PC-3 (cell line): ENCODE measurements at regions of chr21 and their contacts with region 1.

Region 1: DNA sequence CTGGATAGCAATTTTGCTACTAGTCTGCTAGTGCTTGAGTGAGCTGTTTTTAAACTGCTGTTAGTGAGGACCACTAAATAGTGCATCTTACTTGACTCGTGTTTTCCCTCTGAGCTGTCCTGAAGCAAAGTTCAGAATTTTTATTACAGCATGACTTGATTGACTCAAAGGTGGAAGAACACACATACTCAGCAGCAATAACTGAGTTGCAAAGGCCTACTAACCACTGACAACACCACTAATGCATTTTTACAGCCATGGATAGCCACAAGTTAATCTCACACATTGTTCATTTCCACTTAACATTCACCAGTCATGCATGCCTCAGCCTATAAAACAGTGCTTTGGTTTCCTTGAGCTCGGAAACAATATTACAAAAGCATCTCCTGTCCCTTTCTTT is 148.7 kb downstream of the RUNX1 start:
- DNase-seq: peak; percentile 96
- ATAC-seq: peak; percentile 97
- H3K4me3 ChIP-seq: 0 out of 2 replicates have a peak overlapping the region, but pooled peaks have one; percentile 19
- H3K27ac ChIP-seq: peak overlapping the region; percentile 78
- H3K4me1 ChIP-seq: peaks cover 22% of the 10 kb centered on the region
- H3K27me3 ChIP-seq: no peaks in the 10 kb centered on the region
- CTCF ChIP-seq: no peak

Region 2: GRCh38 chr21:34865928-34866284 is 34.5 kb before region 1 on chr21:
- CTCF ChIA-PET with region 1: no interaction called
- POLR2A ChIA-PET with region 1: no interaction called
- intact Hi-C with region 1: no loop called
- DNase-seq: peak; percentile 62
- ATAC-seq: peak; percentile 6; the same call in 1 of the 2 replicates
- H3K4me3 ChIP-seq: no peak overlapping the region
- H3K27ac ChIP-seq: peak overlapping the region; percentile 78
- H3K4me1 ChIP-seq: peaks cover 50% of the 10 kb centered on the region
- H3K27me3 ChIP-seq: no peaks in the 10 kb centered on the region
- CTCF ChIP-seq: no peak

Region 3: GRCh38 chr21:34933609-34934335 is 33.4 kb after region 1 on chr21:
- CTCF ChIA-PET with region 1: no interaction called
- POLR2A ChIA-PET with region 1: no interaction called
- intact Hi-C with region 1: no loop called
- DNase-seq: no peak
- ATAC-seq: no peak
- H3K4me3 ChIP-seq: no peak overlapping the region
- H3K27ac ChIP-seq: no peak overlapping the region
- H3K4me1 ChIP-seq: peaks cover 35% of the 10 kb centered on the region
- H3K27me3 ChIP-seq: no peaks in the 10 kb centered on the region
- CTCF ChIP-seq: no peak

Region 4: DNA sequence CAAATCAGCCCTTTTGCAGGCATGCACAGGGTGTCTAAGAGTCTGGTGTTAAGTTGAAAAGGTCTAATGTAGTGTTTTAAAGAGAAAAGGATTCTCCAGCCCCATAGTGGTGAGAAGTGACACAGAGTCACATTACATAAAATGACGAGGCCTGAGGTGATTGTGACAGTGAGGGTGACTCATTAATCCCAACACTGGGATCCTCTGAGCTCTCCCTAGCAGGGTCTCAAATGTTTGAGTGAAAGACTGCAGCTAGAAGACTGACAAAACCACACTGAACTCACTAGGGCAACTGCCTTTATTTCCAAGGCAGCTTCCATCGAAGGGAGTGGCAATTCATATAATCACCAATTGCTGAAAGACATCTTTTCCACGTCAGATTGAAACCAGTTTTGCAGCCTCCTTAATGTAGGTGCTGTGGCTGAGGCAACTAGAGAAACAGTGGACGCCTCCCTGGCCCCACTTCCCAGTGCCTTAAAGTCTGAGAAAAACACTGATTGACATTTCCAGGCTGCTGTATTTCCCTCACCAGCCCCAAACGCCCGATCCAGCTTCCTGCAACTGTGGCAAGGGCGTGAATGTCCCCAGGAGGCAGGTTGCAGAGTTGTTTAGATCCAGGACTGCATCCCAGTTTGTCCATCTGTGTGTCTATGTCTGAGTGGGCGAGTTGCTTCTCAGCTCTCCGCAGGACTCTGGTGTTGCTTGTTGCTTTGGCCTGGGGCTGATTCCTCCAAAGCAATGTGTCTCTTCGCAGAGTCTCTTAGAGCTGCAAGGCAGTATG is 67.3 kb after region 1 on chr21:
- CTCF ChIA-PET with region 1: no interaction called
- POLR2A ChIA-PET with region 1: no interaction called
- intact Hi-C with region 1: loop called (anchors 5 kb)
- DNase-seq: peak; percentile 88
- ATAC-seq: peak; percentile 55
- H3K4me3 ChIP-seq: no peak overlapping the region
- H3K27ac ChIP-seq: peak overlapping the region; percentile 85
- H3K4me1 ChIP-seq: peaks cover 42% of the 10 kb centered on the region
- H3K27me3 ChIP-seq: no peaks in the 10 kb centered on the region
- CTCF ChIP-seq: no peak

Region 5: GRCh38 chr21:35204850-35205541 is 304.6 kb after region 1 on chr21:
- CTCF ChIA-PET with region 1: no interaction called
- POLR2A ChIA-PET with region 1: no interaction called
- intact Hi-C with region 1: loop called (anchors 5 kb)
- DNase-seq: no peak
- ATAC-seq: no peak
- H3K4me3 ChIP-seq: no peak overlapping the region
- H3K27ac ChIP-seq: no peak overlapping the region
- H3K4me1 ChIP-seq: peaks cover 28% of the 10 kb centered on the region
- H3K27me3 ChIP-seq: no peaks in the 10 kb centered on the region
- CTCF ChIP-seq: no peak